H1 (cell line): ENCODE measurements at regions of chr1 and their contacts with region 1.

Region 1: DNA sequence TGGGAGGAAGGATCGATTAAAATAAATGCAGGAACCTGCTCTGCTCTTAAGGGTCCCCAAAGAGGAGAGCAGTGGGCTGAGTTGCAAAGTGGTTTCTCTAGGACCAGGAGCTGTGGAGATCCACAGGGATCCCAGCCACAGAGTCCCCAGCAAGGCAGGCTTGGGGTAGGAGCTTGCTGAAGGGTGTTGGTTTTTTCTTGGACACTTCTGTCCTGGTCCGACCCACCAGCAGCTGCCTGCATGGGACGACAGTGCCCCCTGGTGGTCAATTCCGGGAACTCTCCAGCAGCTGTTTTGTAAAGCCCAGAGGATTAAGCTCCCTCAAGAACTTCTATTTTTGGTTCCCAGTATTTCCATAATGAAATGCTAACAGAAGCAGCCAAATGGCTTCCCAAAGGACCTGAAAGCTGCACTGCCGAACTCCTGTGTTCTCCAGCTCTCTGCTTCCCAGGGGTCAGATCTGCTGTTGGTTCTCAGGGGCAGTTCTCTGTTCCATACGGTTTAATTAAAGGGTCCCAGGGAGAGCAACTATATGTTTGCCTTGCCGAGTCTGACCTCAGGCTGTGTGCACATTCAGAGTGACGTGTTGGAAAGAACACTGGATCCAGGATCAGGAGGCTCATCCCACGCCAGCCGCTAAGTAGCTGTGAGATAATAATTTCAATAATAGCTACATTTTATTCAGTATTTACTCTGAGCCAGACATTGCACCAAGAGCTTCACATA is 23.2 kb downstream of the NENF start:
- DNase-seq: peak; percentile 71 to 98
- H3K4me3 ChIP-seq: no peak overlapping the region
- H3K27ac ChIP-seq: no peak overlapping the region
- H3K4me1 ChIP-seq: peaks cover 0 to 4% (median under 1%) of the 10 kb centered on the region in 4 experiments; a peak in 2 of 7 replicates
- H3K27me3 ChIP-seq: no peaks in the 10 kb centered on the region
- CTCF ChIP-seq: peak; percentile 86 to 92 (median 90)
- EP300 ChIP-seq: no peak
- POLR2A ChIP-seq: no peak
- RAD21 ChIP-seq: peak; percentile 98

Region 2: DNA sequence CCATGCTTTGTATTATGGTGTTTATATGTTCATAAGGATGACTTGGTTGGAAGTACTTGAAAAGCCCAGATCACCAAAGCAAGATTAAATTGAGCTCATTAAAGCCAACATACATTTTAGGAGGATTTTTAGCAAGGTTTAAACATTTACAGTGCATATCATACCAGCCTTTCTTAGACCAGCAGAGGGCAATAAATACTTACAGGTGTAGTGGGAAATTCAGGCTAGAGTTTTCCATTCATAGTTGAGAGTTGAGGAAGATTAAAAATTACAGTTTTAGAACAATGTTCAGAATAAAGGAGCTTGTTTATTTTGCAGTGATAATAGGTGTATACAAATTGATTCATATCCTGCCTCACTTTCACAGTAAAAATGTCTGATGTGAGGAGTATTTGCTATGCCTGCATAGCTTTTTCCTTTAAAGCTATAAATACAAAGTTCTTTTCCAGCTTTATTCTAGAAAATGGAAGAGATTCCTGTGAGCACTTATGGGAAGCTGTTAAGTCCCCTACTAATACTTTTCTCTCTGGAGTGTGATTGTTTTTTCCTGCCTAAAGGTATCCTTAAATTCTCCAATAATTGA is 385.2 kb before region 1 on chr1:
- CTCF ChIA-PET with region 1: interaction called, 39 read pairs
- POLR2A ChIA-PET with region 1: no interaction called
- DNase-seq: no peak
- H3K4me3 ChIP-seq: no peak overlapping the region
- H3K27ac ChIP-seq: no peak overlapping the region
- H3K4me1 ChIP-seq: no peaks in the 10 kb centered on the region
- H3K27me3 ChIP-seq: no peaks in the 10 kb centered on the region
- CTCF ChIP-seq: peak in 2 of 3 experiments; percentile 36 to 43; a peak in 2 of 4 replicates
- EP300 ChIP-seq: no peak
- POLR2A ChIP-seq: no peak
- RAD21 ChIP-seq: peak; percentile 77 to 78

Region 3: DNA sequence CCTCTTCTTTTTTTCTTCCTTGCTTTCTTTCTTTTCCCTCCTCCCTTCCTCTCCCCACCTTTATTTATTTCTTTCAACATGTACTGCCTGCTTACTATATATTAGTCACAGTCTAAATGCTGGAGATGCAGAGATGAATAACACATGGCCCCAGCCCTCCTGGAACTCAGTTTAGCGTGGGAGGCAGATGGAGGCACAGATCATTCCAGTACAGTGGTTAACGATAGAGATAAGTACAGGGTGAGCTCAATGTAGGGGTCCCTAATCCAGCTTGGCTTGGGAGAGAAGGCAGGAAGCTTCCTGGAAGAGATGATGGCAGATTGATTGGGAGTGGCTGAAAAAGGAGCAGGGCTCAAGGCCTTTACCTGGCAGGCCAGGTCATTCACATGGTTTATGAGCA is 226.3 kb before region 1 on chr1:
- CTCF ChIA-PET with region 1: no interaction called
- POLR2A ChIA-PET with region 1: no interaction called
- DNase-seq: no peak
- H3K4me3 ChIP-seq: no peak overlapping the region
- H3K27ac ChIP-seq: no peak overlapping the region
- H3K4me1 ChIP-seq: 0 out of 7 replicates have a peak, but pooled peaks cover 0 to 4% (median 0%) of the 10 kb centered on the region in 4 experiments
- H3K27me3 ChIP-seq: no peaks in the 10 kb centered on the region
- CTCF ChIP-seq: no peak
- EP300 ChIP-seq: no peak
- POLR2A ChIP-seq: no peak
- RAD21 ChIP-seq: no peak

Region 4: DNA sequence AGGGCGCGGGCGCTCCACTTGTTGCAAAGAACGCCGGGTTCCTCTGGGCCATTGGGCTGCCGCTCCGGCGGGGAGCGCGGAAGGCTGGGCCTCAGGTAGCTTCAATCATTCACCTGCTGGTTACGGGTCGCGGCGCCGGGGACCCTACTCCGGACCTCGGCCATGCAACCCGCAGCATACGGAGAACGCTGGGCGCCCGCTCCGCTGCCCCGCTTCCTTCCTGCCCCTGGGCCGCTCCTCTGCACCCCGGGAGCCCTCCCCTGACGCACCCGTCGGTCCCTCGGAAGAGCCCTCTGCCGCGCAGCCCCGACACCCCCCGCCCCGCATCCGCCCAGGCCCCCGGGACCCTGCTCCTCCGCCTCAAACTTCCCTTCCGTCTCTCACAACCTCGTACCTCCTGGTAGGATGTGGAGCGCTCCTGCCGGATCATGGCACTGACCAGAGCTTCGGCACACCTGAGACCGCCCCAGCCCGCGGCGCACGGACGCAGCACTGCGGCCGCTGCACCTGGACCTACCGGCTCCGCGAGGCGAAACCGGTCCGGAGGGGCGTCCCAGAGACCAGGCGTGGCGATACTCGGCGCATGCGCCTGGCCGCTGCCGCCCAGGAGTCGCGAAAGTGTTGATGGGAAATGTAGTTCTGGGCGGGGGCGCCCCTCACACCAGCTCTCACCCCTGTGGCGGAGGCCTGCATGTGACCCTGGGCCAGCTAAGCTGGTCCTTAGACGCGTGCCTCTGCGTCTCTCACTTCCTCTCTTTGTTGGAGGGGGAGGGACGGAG is 41.4 kb before region 1 on chr1 and contains the start of gene PACC1:
- CTCF ChIA-PET with region 1: interaction called, 18 read pairs
- POLR2A ChIA-PET with region 1: interaction called, 3 read pairs
- DNase-seq: peak; percentile 91 to 96
- H3K4me3 ChIP-seq: peak within 1 kb of the TSS; percentile 65 to 77 (median 73)
- H3K27ac ChIP-seq: no peak within 1 kb of the TSS
- H3K4me1 ChIP-seq: peaks cover 4 to 15% (median 9%) of the 10 kb centered on the region in 4 experiments; a peak in 6 of 7 replicates
- H3K27me3 ChIP-seq: no peaks in the 10 kb centered on the region; a peak in 2 of 7 replicates
- CTCF ChIP-seq: no peak
- EP300 ChIP-seq: no peak
- POLR2A ChIP-seq: peak; percentile 87 to 91
- RAD21 ChIP-seq: peak in 1 of 2 experiments; percentile 3; a peak in 1 of 4 replicates
- total RNA-seq, gene PACC1: 16.7 and 18.8 TPM in 2 replicates

Region 5: DNA sequence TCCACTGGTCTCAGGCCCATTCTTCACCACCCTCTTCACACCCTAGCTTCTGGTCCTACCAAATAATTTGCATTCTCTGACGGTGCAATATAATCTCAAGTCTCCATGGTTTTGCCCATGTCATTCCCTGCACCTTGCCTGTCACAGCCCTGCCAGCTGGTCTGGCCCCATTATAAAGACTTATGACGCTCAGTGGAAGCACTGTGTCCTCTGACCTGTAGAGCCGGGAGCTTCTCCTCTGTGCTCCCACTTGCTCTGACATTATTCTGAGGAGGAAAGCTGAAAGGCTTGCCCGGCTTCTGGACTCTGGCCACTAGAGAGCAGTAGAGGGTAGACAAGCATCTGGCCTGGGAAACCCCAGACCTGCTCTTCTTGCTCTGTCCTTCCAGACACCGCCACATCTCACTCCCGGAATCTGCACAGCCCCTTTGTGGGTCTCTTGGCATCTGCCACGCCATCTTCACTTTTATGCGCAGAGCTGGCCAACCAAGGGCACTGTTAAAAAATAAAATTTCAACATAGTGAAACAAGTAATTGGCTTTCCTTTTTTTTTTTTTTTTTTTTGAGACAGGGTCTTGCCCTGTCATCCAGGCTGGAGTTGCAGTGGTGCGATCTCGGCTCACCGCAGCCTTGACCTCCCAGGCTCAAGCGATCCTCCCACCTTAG is 21.2 kb after region 1 on chr1:
- CTCF ChIA-PET with region 1: interaction called, 143 read pairs
- POLR2A ChIA-PET with region 1: no interaction called
- DNase-seq: peak; percentile 67 to 81
- H3K4me3 ChIP-seq: no peak overlapping the region
- H3K27ac ChIP-seq: no peak overlapping the region
- H3K4me1 ChIP-seq: peaks cover 0 to 2% (median 0%) of the 10 kb centered on the region in 4 experiments; a peak in 1 of 7 replicates
- H3K27me3 ChIP-seq: no peaks in the 10 kb centered on the region
- CTCF ChIP-seq: peak; percentile 75 to 95 (median 93)
- EP300 ChIP-seq: no peak
- POLR2A ChIP-seq: no peak
- RAD21 ChIP-seq: peak; percentile 94 to 97

Region 6: GRCh38 chr1:212665241-212666115 is 209.5 kb after region 1 on chr1:
- CTCF ChIA-PET with region 1: interaction called, 57 read pairs
- POLR2A ChIA-PET with region 1: no interaction called
- DNase-seq: peak in 1 of 2 experiments; percentile 95
- H3K4me3 ChIP-seq: peak overlapping the region; percentile 34 to 77 (median 62)
- H3K27ac ChIP-seq: no peak overlapping the region
- H3K4me1 ChIP-seq: no peaks in the 10 kb centered on the region; a peak in 1 of 7 replicates
- H3K27me3 ChIP-seq: peaks cover 0 to 9% (median 5%) of the 10 kb centered on the region in 4 experiments; a peak in 4 of 7 replicates
- CTCF ChIP-seq: peak; percentile 95 to 96 (median 96)
- EP300 ChIP-seq: no peak
- POLR2A ChIP-seq: no peak
- RAD21 ChIP-seq: peak; percentile 90 to 94

Region 7: DNA sequence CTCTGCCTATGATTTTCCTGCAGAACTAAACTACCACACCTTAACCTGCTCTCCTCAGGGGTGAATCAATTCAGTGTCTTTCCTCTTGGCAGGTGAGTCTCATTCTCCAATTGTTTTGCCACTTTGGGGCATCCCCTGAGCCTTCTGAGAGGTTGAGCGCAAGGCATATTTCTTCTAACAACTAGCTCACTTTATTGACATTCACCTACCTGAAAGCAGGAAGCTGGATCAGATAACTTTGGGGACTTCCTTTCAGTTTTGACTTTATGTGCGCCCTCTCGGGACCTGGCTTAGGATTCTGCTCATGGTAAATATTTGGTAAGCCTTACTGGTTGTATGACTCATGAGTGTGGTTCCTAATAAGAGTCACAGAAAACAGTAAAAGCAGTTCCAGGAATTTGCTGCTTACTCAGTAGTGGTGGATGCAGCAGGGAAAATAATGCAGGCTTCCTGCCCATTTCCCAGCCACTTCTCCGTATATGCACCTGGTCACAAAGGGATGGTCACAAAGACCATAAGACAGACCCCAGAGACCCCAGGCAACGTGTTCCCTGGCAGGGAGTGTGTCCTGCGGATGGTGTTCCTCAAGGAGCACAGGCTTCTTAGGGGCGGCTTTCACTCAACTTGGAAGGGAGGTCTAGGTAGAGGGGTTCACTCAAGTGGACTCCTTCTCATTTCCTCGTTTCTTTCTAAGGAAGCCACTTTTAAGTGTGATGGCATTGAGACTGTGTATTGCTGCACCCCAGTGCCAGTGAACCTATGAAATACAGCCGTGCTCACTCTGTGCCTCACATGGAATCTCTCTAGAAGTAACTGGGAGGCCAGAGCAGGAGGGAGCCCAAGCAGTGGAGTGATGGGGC is 265.7 kb after region 1 on chr1:
- CTCF ChIA-PET with region 1: interaction called, 19 read pairs
- POLR2A ChIA-PET with region 1: no interaction called
- DNase-seq: no peak
- H3K4me3 ChIP-seq: no peak overlapping the region
- H3K27ac ChIP-seq: no peak overlapping the region
- H3K4me1 ChIP-seq: no peaks in the 10 kb centered on the region
- H3K27me3 ChIP-seq: no peaks in the 10 kb centered on the region
- CTCF ChIP-seq: no peak
- EP300 ChIP-seq: no peak
- POLR2A ChIP-seq: no peak
- RAD21 ChIP-seq: no peak

Region 8: DNA sequence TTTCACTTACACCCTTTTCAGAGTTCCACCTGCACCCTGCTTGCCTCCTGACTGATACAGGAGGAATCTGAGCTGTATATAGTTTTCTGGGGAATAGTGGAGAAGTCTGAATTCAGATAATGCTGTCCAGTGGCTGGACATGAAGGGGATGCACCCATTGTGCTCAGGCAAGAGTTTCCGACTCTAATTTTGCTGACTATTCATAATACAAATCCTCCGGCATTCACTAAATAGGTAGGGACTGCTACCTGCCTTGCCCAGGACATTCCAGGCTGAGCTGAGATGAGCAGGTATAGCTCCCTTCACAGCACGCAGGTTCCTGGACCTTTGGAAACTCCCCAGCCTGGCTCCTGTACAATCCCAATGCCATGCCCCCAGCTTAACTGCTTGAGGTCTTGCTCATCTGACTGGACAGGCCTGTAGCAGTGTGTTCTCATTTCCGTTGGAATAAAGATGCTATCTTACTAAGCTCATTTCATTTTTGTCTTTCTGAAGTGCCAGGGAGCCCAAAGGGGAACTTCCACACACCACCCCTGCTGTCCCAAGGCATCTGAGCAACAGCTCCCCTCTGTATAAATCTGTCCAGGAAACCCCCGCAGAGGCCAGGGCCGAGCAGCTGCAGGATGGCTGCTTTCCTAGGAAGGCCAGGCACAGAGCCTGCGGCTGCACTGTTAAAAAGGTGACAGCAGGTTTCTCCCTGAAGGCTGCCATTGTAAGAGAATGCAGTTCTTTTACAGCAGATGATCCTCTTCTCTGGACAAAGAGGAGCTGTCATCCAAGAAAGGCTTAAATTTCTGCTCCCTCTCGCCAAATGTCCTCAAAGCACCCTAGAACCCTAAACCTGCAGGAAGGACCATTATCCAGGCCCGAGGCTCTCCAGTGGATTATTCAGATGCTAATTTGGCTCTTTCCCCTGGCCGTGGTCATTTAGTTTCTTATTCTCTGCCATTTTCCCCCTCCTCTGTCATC is 472.6 kb after region 1 on chr1:
- CTCF ChIA-PET with region 1: no interaction called
- POLR2A ChIA-PET with region 1: no interaction called
- DNase-seq: peak in 1 of 2 experiments; percentile 54
- H3K4me3 ChIP-seq: peak overlapping the region in 1 of 4 experiments; percentile 16; a peak in 1 of 8 replicates
- H3K27ac ChIP-seq: peak overlapping the region; percentile 5; the same call in 1 of the 2 replicates
- H3K4me1 ChIP-seq: peaks cover 9 to 20% (median 14%) of the 10 kb centered on the region in 4 experiments
- H3K27me3 ChIP-seq: no peaks in the 10 kb centered on the region
- CTCF ChIP-seq: no peak
- EP300 ChIP-seq: no peak
- POLR2A ChIP-seq: no peak
- RAD21 ChIP-seq: no peak